ENCODE measurements at regions of chr10 and their contacts with region 1.

Region 1: DNA sequence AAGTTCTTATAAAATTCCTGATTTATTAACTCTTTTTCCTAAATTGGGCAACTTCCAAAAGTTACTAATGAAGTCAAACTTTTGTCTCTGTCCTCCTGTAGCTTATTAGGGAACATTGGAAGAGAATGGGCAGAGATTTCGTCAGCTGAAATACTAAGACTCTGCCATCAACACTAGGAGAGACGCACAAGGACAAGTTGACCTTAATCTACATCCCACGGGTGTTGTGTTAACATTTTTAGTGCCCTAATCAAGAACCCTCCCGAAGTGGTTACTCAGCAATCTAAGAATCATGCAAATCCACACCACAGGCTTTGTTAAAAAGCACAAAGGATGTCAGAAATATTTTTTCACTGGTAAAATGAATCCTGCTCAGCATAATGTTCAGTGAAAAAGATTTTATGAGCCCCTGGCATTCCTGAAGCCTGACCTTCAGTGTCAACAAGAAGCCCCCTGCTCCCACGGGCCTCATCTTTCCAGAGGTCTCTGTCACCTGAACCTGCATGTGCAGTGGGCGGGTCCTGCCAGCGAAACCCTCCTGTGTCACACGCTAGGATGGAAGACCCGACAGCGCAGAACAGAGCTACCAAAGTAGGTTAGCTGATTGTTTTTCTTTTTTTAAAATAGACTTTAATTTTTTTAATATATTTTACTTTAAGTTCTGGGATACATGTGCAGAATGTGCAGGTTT is 70.6 kb upstream of the AKR1E2 start:
- DNase-seq: no peak
- H3K4me3 ChIP-seq: no peak overlapping the region
- CTCF ChIP-seq: no peak
- POLR2A ChIP-seq: no peak

Region 2: GRCh38 chr10:4512671-4513240 is 242.7 kb before region 1 on chr10:
- intact Hi-C with region 1: loop called (anchors 10 kb)
- DNase-seq: peak in 1 of 2 donors; percentile 54
- H3K4me3 ChIP-seq: no peak overlapping the region
- CTCF ChIP-seq: no peak
- POLR2A ChIP-seq: no peak

Region 3: DNA sequence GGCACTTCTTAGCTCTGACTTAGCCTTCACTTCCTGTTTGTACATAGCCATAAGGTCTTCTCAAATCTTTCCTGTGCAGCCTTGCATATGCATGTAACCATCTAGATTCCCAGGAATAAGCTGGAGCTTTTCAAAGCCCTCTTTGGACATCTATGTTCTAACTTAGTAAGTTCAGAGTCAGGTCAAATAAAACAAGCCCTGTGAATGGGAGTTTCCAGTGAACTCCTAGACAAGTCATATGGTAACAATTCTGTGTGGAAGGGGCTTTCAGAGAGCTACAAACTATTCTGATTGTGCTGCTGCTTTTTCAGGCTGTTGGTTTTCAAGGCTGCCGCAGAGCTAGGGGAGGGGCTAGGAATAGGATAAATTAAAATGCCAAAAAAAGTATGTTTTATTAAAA is 137.9 kb before region 1 on chr10:
- intact Hi-C with region 1: no loop called
- DNase-seq: no peak
- H3K4me3 ChIP-seq: no peak overlapping the region
- CTCF ChIP-seq: no peak
- POLR2A ChIP-seq: no peak

Region 4: DNA sequence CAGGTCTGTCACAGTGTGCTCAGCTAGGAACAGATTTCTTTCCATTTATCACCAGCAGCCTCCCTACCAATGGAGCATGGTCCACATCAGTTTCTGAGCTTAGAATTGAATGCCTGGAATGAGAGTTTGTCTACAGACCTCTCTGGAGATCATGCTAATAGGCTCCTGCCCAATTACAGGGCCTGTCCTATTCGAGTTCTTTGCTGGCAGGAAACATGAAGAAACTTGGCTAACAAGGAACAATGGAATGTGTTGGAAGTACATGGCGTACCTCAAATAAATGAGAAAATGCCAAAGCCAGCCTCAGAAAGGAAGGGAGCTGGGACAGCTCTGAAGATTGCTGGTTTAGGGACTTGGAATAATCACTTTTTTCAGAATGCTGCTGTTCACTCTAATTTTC is 115.5 kb before region 1 on chr10:
- intact Hi-C with region 1: no loop called
- DNase-seq: peak in 1 of 2 donors; percentile 48
- H3K4me3 ChIP-seq: no peak overlapping the region
- CTCF ChIP-seq: no peak
- POLR2A ChIP-seq: no peak

Region 5: GRCh38 chr10:4780782-4781181 is 25.3 kb after region 1 on chr10:
- intact Hi-C with region 1: no loop called
- DNase-seq: no peak
- H3K4me3 ChIP-seq: no peak overlapping the region
- CTCF ChIP-seq: no peak
- POLR2A ChIP-seq: no peak

Region 6: DNA sequence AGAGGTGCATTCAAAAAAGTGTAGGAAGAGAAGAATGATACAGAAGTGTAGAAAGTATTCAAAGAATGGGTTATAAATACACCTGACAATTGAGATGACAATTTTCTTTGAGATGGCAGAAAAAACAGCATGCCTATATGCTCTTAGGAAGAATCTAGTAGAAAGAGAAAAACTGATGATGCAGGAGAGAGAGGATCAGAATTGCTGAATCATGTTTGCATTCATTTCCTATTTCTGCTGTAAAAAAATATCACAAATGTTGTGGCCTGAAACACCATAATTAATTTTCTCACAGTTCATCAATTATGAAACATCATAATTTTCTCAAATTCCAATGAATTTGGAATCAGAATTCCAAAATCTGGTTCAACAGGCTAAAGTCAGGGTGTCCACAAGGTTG is 198.0 kb after region 1 on chr10:
- intact Hi-C with region 1: no loop called
- DNase-seq: no peak
- H3K4me3 ChIP-seq: no peak overlapping the region
- CTCF ChIP-seq: no peak
- POLR2A ChIP-seq: no peak

Measured in lower leg skin (tissue), 4 donors.